ENCODE measurements at regions of chr3 and their contacts with region 1.

Region 1: GRCh38 chr3:149969940-149970715 is 567 bp downstream of the PFN2 start:
- DNase-seq: peak; percentile 80 to 91
- ATAC-seq: peak; percentile 55 to 65 (median 59)
- H3K4me3 ChIP-seq: peak overlapping the region; percentile 90
- H3K27ac ChIP-seq: peak overlapping the region; percentile 97
- H3K4me1 ChIP-seq: peaks cover 17% of the 10 kb centered on the region
- H3K27me3 ChIP-seq: no peaks in the 10 kb centered on the region
- CTCF ChIP-seq: no peak

Region 2: GRCh38 chr3:150062492-150062891 is 92.4 kb after region 1 on chr3:
- intact Hi-C with region 1: loop called in 1 of 2 experiments (anchors 2 kb)
- DNase-seq: no peak
- ATAC-seq: peak; percentile 41 to 66 (median 45)
- H3K4me3 ChIP-seq: peak overlapping the region; percentile 31
- H3K27ac ChIP-seq: peak overlapping the region; percentile 95
- H3K4me1 ChIP-seq: peaks cover 61% of the 10 kb centered on the region
- H3K27me3 ChIP-seq: no peaks in the 10 kb centered on the region
- CTCF ChIP-seq: no peak

Region 3: GRCh38 chr3:150069154-150069527 is 99.0 kb after region 1 on chr3:
- intact Hi-C with region 1: loop called in 1 of 2 experiments (anchors 2 kb)
- DNase-seq: no peak
- ATAC-seq: peak; percentile 89 to 93 (median 92)
- H3K4me3 ChIP-seq: no peak overlapping the region
- H3K27ac ChIP-seq: peak overlapping the region; percentile 90
- H3K4me1 ChIP-seq: peaks cover 43% of the 10 kb centered on the region
- H3K27me3 ChIP-seq: no peaks in the 10 kb centered on the region
- CTCF ChIP-seq: no peak

Region 4: DNA sequence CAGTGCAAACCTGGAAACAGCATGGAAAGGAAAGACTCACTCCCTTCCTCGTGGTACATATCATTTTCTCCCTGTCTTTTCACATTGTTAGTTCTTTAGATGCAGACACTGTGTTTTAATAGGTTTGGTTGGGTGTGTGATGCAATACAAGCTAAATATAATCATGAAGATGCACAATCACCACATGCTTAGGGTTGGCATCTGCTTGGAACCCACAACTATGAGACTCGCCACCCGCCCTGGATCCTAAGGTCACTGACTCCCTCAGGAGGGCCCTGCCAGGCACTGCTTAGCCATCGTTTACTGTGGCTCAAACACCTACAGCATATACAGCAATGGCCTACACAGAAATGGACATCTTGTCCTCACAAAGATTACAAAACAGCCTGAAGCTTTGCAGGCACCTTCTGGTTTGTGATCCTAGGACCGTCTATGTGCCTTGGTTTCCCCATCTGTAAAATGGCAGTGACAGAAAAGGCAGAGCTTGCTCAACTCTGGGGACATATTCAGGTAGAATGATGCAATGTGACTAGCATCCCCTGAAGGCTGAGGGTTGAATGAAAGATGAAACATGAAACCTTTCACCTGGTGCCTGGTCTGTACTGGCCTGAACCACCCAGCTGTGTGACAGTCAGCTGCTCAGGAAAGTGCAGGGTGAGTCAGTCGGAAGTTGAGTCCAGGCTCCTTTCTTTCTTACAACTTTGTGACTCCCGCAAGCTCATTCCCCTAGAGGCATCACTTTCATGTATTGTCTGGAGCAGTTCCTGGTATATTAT is 124.2 kb after region 1 on chr3:
- intact Hi-C with region 1: loop called (anchors 1 to 5 kb)
- DNase-seq: peak; percentile 67 to 91
- ATAC-seq: peak; percentile 93 to 95 (median 94)
- H3K4me3 ChIP-seq: no peak overlapping the region
- H3K27ac ChIP-seq: peak overlapping the region; percentile 90
- H3K4me1 ChIP-seq: peaks cover 55% of the 10 kb centered on the region
- H3K27me3 ChIP-seq: no peaks in the 10 kb centered on the region
- CTCF ChIP-seq: no peak

Region 5: GRCh38 chr3:150183678-150184425 is 213.7 kb after region 1 on chr3:
- intact Hi-C with region 1: loop called (anchors 1 to 5 kb)
- DNase-seq: peak; percentile 71 to 82
- ATAC-seq: peak; percentile 97 to 99 (median 98)
- H3K4me3 ChIP-seq: peak overlapping the region; percentile 58
- H3K27ac ChIP-seq: peak overlapping the region; percentile 81
- H3K4me1 ChIP-seq: no peaks in the 10 kb centered on the region
- H3K27me3 ChIP-seq: no peaks in the 10 kb centered on the region
- CTCF ChIP-seq: peak; percentile 63

Region 6: GRCh38 chr3:150216041-150216811 is 246.1 kb after region 1 on chr3:
- intact Hi-C with region 1: loop called in 1 of 2 experiments (anchors 2 kb)
- DNase-seq: peak; percentile 47 to 71
- ATAC-seq: peak; percentile 91 to 96 (median 94)
- H3K4me3 ChIP-seq: peak overlapping the region; percentile 38
- H3K27ac ChIP-seq: peak overlapping the region; percentile 79
- H3K4me1 ChIP-seq: peaks cover 9% of the 10 kb centered on the region
- H3K27me3 ChIP-seq: no peaks in the 10 kb centered on the region
- CTCF ChIP-seq: no peak

Region 7: DNA sequence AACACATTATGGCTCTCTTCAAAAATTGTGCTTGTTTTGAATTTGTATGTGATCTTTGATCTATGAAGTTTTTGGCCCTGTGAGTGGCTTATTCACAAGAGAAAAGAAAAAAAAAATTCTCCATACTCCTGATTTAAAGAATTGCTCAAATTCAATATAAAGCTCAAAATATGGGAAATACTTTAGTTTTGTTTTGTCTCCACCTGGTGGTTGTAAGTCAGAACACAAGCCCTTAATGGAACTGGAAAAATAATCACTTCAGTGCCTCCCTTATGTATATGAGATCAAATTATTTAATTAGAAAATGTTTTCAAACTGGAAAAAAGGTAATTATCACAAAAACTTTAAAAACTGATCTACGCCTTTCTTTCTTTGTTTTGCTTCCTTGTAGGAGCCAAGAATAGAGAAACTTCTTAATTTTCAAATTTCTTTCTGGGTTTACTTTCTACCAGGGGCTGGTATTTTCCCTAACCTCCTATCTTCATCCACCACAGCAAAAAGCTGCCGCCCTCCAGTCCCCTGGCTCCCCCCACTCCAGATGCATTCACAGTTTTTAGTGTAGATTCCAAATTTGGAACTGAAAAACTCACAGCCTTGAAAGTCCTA is 525.5 kb after region 1 on chr3:
- intact Hi-C with region 1: loop called in 1 of 2 experiments (anchors 10 kb)
- DNase-seq: no peak
- ATAC-seq: peak in 3 of 4 donors; percentile 57 to 70 (median 65)
- H3K4me3 ChIP-seq: no peak overlapping the region
- H3K27ac ChIP-seq: no peak overlapping the region
- H3K4me1 ChIP-seq: no peaks in the 10 kb centered on the region
- H3K27me3 ChIP-seq: no peaks in the 10 kb centered on the region
- CTCF ChIP-seq: peak; percentile 83

Measured in psoas muscle (tissue), 8 donors.